ENCODE measurements at regions of chr1 and their contacts with region 1.

Region 1: DNA sequence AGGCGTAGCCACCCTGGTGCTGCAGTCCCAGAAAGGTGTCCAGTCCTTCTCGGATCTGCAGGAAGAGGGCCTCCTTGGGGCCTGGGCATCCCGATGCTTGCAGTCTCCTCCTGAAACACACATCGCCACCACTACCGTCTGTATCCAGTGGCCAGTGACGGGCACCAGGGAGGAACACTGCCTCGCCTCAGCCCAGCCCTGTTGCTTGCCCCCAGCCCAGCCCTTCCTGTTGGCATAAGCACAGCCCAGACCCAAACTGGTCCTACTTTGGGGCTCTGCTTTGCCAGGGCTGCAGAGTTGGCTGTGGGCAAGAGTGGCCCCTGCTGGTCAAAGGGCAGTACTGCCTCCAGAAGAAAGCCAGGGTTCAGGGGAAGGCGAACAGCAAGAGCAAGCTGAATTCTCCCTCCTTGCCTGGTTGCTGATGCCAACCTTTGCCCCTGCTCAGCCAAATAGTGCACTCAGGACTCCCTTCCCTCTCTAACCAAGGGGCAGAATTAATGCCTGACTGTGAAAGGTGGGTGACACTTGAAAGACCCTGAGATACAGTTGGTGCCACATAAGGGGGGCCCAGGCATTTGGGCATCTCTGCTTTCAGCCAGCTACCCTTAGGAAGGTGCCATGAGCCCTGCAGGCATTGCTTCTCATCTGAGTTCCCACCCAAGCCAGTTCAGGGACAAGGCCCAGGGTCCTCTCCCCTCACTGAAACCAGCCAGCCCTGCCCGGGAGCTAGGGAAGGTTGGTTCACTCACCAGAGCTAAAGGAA is 11.1 kb upstream of the ARHGEF2 start:
- DNase-seq: peak; percentile 85
- ATAC-seq: peak; percentile 98
- H3K4me3 Mint-ChIP-seq: no peak overlapping the region
- H3K27ac Mint-ChIP-seq: peak overlapping the region; percentile 44
- H3K4me1 Mint-ChIP-seq: peaks cover 19% of the 10 kb centered on the region
- H3K27me3 Mint-ChIP-seq: no peaks in the 10 kb centered on the region

Region 2: GRCh38 chr1:155840386-155840785 is 149.0 kb before region 1 on chr1:
- CTCF ChIA-PET with region 1: no interaction called
- POLR2A ChIA-PET with region 1: no interaction called
- DNase-seq: no peak
- ATAC-seq: no peak
- H3K4me3 Mint-ChIP-seq: no peak overlapping the region
- H3K27ac Mint-ChIP-seq: no peak overlapping the region
- H3K4me1 Mint-ChIP-seq: peaks cover 27% of the 10 kb centered on the region
- H3K27me3 Mint-ChIP-seq: no peaks in the 10 kb centered on the region

Region 3: DNA sequence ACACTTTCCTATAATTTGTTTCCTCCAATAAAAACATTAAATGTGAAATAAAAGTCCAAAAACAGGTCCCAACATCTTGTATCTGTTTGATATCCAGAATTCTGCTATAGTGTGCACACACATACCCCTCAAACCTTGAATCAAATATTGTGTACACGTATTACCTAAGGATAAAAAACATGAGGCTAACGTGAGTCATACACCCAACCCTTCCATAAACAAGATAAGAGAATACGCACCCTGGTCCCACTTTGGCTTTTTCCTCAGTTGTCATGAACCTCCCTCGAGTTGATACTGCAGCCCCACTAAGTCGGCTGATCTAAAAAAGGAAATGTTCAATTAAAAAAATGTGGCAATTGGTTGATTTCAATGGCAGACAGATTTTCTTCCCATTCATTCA is 60.4 kb before region 1 on chr1:
- CTCF ChIA-PET with region 1: interaction called, 96 read pairs
- POLR2A ChIA-PET with region 1: interaction called, 14 read pairs
- DNase-seq: no peak
- ATAC-seq: no peak
- H3K4me3 Mint-ChIP-seq: no peak overlapping the region
- H3K27ac Mint-ChIP-seq: no peak overlapping the region
- H3K4me1 Mint-ChIP-seq: peaks cover 42% of the 10 kb centered on the region
- H3K27me3 Mint-ChIP-seq: no peaks in the 10 kb centered on the region

Region 4: GRCh38 chr1:155946633-155947219 is 42.7 kb before region 1 on chr1:
- CTCF ChIA-PET with region 1: interaction called, 44 read pairs
- POLR2A ChIA-PET with region 1: no interaction called
- DNase-seq: no peak
- ATAC-seq: no peak
- H3K4me3 Mint-ChIP-seq: peak overlapping the region; percentile 46
- H3K27ac Mint-ChIP-seq: peak overlapping the region; percentile 87
- H3K4me1 Mint-ChIP-seq: peaks cover 53% of the 10 kb centered on the region
- H3K27me3 Mint-ChIP-seq: no peaks in the 10 kb centered on the region

Region 5: GRCh38 chr1:155978325-155978972 is 11.0 kb before region 1 on chr1 and contains the start of gene ARHGEF2:
- CTCF ChIA-PET with region 1: interaction called, 135 read pairs
- POLR2A ChIA-PET with region 1: interaction called, 9 read pairs
- DNase-seq: peak; percentile 87
- ATAC-seq: peak; percentile 70
- H3K4me3 Mint-ChIP-seq: peak within 1 kb of the TSS; percentile 96
- H3K27ac Mint-ChIP-seq: peak within 1 kb of the TSS; percentile 93
- H3K4me1 Mint-ChIP-seq: peaks cover 74% of the 10 kb centered on the region
- H3K27me3 Mint-ChIP-seq: no peaks in the 10 kb centered on the region
- total RNA-seq, gene ARHGEF2: 142 to 147 TPM

Region 6: GRCh38 chr1:156006666-156007376 is 17.4 kb after region 1 on chr1:
- CTCF ChIA-PET with region 1: interaction called, 18 read pairs
- POLR2A ChIA-PET with region 1: no interaction called
- DNase-seq: no peak
- ATAC-seq: no peak
- H3K4me3 Mint-ChIP-seq: no peak overlapping the region
- H3K27ac Mint-ChIP-seq: no peak overlapping the region
- H3K4me1 Mint-ChIP-seq: peaks cover 34% of the 10 kb centered on the region
- H3K27me3 Mint-ChIP-seq: no peaks in the 10 kb centered on the region

Region 7: GRCh38 chr1:156082309-156083091 is 93.1 kb after region 1 on chr1 and contains the start of gene MEX3A:
- CTCF ChIA-PET with region 1: no interaction called
- POLR2A ChIA-PET with region 1: no interaction called
- DNase-seq: peak; percentile 70
- ATAC-seq: peak; percentile 91
- H3K4me3 Mint-ChIP-seq: peak within 1 kb of the TSS; percentile 74
- H3K27ac Mint-ChIP-seq: no peak within 1 kb of the TSS
- H3K4me1 Mint-ChIP-seq: peaks cover 7% of the 10 kb centered on the region
- H3K27me3 Mint-ChIP-seq: peaks cover 63% of the 10 kb centered on the region
- total RNA-seq, gene MEX3A: 0.05 TPM

Region 8: DNA sequence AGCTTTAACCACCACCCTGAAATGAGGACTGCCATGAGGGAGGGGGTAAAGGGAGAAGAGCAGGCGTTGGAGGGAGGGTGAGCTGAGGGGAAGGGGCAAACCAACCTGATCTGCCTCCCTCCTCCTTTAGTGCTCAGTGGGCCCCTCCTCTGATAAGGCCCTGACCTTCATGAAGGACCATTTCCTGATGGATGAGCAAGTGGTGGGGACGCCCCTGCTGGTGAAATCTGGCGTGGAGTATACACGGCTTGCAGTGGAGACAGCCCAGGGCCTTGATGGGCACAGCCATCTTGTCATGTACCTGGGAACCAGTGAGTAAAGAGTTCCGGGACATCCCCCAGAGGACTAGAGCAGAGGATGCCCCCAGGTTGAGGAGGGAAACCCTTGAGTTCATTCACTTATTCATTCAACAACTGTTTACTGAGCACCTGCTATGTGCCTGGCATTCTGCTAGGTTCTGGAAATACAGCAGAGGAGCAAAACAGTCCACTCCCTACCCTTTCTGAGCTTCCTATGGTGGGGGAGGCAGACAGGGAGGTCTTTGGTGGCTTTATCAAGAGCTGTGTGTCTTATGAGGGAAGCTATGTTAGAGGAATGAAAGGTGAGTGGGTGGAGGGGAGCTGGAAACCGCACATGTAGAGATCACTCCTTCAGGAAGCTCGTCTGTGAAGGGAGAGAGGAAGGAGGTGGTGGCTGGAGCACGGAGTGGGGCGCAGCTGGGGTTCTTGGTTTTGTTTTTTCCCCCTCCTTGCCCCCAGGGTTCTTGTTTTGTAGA is 183.5 kb after region 1 on chr1:
- CTCF ChIA-PET with region 1: no interaction called
- POLR2A ChIA-PET with region 1: no interaction called
- DNase-seq: no peak
- ATAC-seq: no peak
- H3K4me3 Mint-ChIP-seq: no peak overlapping the region
- H3K27ac Mint-ChIP-seq: peak overlapping the region; percentile 20
- H3K4me1 Mint-ChIP-seq: peaks cover 21% of the 10 kb centered on the region
- H3K27me3 Mint-ChIP-seq: no peaks in the 10 kb centered on the region

Measured in activated CD8-positive, alpha-beta T cell treated with anti-CD3 and anti-CD28 coated beads, Interleukin-2, amount 10 ng/mL, durations not matched to agents 7 days and 5 days (primary cell).